ENCODE measurements at regions of chr10 and their contacts with region 1.

Region 1: GRCh38 chr10:53209944-53210611 is 437.5 kb upstream of the MBL2 start:
- DNase-seq: no peak
- H3K4me3 Mint-ChIP-seq: no peak overlapping the region
- H3K27ac Mint-ChIP-seq: no peak overlapping the region
- H3K4me1 Mint-ChIP-seq: no peaks in the 10 kb centered on the region
- H3K27me3 Mint-ChIP-seq: no peaks in the 10 kb centered on the region
- CTCF ChIP-seq: no peak

Region 2: GRCh38 chr10:52818019-52818418 is 392.1 kb before region 1 on chr10:
- CTCF ChIA-PET with region 1: no interaction called
- intact Hi-C with region 1: loop called (anchors 10 kb)
- DNase-seq: peak; percentile 30
- H3K4me3 Mint-ChIP-seq: no peak overlapping the region
- H3K27ac Mint-ChIP-seq: no peak overlapping the region
- H3K4me1 Mint-ChIP-seq: no peaks in the 10 kb centered on the region
- H3K27me3 Mint-ChIP-seq: no peaks in the 10 kb centered on the region
- CTCF ChIP-seq: peak; percentile 29

Region 3: DNA sequence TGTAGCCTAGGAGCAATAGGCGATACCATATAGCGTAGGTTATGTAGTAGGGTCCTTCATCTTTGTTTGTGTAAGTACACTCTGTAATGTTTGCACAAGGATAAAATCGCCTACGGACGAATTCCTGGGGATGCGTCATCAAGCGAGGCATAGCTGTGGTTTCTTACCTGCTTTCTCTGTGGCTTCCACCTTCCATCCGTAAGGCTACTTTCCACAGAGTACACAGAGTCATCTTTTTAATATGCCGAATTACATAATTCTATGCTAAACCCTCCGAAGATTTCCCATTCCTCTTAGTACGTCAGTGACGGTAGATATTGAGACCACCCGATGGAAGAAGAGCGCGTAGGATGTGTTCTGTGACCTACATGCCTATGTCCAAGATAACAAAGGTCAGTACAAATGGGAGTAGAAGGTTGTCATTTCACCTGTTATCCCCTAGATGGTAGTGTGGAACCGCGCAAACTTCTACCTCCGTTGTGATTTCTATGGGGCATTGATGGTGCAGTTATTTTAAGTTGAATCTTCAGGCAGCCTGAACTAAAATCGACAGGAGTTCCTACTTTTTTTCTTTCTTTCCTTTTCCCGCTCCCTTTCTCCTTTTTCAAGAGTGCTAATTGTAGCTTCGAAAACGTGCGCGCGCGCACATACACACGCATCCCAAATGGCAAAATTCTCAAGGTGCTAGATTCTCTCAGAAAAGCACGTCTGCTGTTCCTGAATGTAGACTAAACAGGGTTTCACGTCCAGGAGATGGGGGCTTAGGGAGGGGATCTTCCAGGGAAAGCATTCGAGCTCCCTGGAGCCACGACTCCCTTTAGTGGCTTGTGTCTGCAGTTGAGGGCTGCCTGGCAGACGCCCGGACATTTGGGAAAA is 325.8 kb before region 1 on chr10:
- CTCF ChIA-PET with region 1: no interaction called
- intact Hi-C with region 1: loop called (anchors 1 kb)
- DNase-seq: peak; percentile 82
- H3K4me3 Mint-ChIP-seq: peak overlapping the region; percentile 63
- H3K27ac Mint-ChIP-seq: peak overlapping the region; percentile 70
- H3K4me1 Mint-ChIP-seq: no peaks in the 10 kb centered on the region
- H3K27me3 Mint-ChIP-seq: peaks cover 7% of the 10 kb centered on the region
- CTCF ChIP-seq: peak; percentile 75

Region 4: GRCh38 chr10:52951824-52952223 is 258.3 kb before region 1 on chr10:
- CTCF ChIA-PET with region 1: no interaction called
- intact Hi-C with region 1: loop called (anchors 5 kb)
- DNase-seq: peak; percentile 70
- H3K4me3 Mint-ChIP-seq: no peak overlapping the region
- H3K27ac Mint-ChIP-seq: no peak overlapping the region
- H3K4me1 Mint-ChIP-seq: no peaks in the 10 kb centered on the region
- H3K27me3 Mint-ChIP-seq: no peaks in the 10 kb centered on the region
- CTCF ChIP-seq: peak; percentile 44

Region 5: DNA sequence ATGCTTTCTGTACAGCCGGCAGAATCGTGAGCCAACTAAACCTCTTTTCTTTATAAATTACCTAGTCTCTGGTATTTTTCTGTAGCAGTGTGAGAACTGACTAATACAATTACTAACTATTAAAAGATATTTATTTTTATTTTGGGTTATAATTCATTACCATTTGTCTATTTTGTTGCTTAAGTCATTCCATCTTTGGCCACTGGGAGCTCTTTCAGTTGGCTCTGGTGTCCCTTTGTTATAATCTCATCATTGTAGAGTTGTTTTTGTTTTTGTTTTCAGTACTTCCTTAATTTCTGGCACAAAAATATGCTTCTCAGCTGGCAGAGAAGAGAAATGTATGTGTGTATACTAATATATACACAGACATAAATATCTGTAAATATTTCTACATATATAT is 370.4 kb after region 1 on chr10:
- CTCF ChIA-PET with region 1: no interaction called
- intact Hi-C with region 1: loop called (anchors 10 kb)
- DNase-seq: no peak
- H3K4me3 Mint-ChIP-seq: no peak overlapping the region
- H3K27ac Mint-ChIP-seq: no peak overlapping the region
- H3K4me1 Mint-ChIP-seq: no peaks in the 10 kb centered on the region
- H3K27me3 Mint-ChIP-seq: no peaks in the 10 kb centered on the region
- CTCF ChIP-seq: no peak

Region 6: GRCh38 chr10:54962134-54962900 is 1752.2 kb after region 1 on chr10:
- CTCF ChIA-PET with region 1: no interaction called
- intact Hi-C with region 1: no loop called
- DNase-seq: no peak
- H3K4me3 Mint-ChIP-seq: no peak overlapping the region
- H3K27ac Mint-ChIP-seq: no peak overlapping the region
- H3K4me1 Mint-ChIP-seq: no peaks in the 10 kb centered on the region
- H3K27me3 Mint-ChIP-seq: no peaks in the 10 kb centered on the region
- CTCF ChIP-seq: no peak

Measured in Calu3 (cell line).